CD14-positive monocyte (primary cell): ENCODE measurements at regions of chr10 and their contacts with region 1.

Region 1: GRCh38 chr10:127450644-127451043 is 98.5 kb upstream of the NPS start:
- DNase-seq: no peak
- H3K4me3 ChIP-seq: no peak overlapping the region
- H3K4me3 Mint-ChIP-seq: no peak overlapping the region
- H3K27ac ChIP-seq: no peak overlapping the region
- H3K27ac Mint-ChIP-seq: no peak overlapping the region
- H3K4me1 ChIP-seq: no peaks in the 10 kb centered on the region
- H3K4me1 Mint-ChIP-seq: no peaks in the 10 kb centered on the region
- H3K27me3 ChIP-seq: no peaks in the 10 kb centered on the region
- H3K27me3 Mint-ChIP-seq: peaks cover 0 to 3% (median 0%) of the 10 kb centered on the region in 3 donors
- CTCF ChIP-seq: no peak

Region 2: DNA sequence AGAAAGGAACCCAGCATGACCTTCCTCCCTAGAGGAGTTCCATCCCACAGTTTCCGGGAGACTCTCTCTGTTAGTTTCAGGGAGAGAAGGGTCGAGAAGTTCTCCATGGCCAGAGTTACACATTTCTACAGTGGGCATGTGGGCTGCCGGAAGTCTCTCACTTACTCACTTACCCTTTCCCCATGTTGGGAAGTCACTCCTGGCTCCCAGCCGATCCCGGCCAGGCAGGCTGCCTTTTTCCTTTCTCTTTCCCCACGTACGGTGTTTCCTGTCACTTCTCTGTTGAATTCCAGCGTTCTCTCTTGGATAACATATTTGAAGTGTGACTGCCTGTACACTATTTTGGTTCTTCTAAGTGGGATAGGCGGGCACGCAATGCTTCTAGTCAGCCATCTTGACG is 1771.2 kb before region 1 on chr10:
- intact Hi-C with region 1: loop called in 1 of 2 experiments (anchors 10 kb)
- DNase-seq: no peak
- H3K4me3 ChIP-seq: no peak overlapping the region
- H3K4me3 Mint-ChIP-seq: no peak overlapping the region
- H3K27ac ChIP-seq: no peak overlapping the region
- H3K27ac Mint-ChIP-seq: no peak overlapping the region
- H3K4me1 ChIP-seq: no peaks in the 10 kb centered on the region
- H3K4me1 Mint-ChIP-seq: peaks cover under 1% of the 10 kb centered on the region
- H3K27me3 ChIP-seq: no peaks in the 10 kb centered on the region
- H3K27me3 Mint-ChIP-seq: peaks cover 0 to 4% (median 4%) of the 10 kb centered on the region in 3 donors
- CTCF ChIP-seq: no peak